Heart left ventricle (tissue), 16 donors: ENCODE measurements at regions of chrX and their contacts with region 1.

Region 1: GRCh38 chrX:149987613-149988012 is 49.3 kb upstream of the EOLA2 start:
- DNase-seq: no peak
- ATAC-seq: no peak
- H3K4me3 ChIP-seq: no peak overlapping the region
- H3K27ac ChIP-seq: no peak overlapping the region
- H3K4me1 ChIP-seq: peaks cover 0 to 9% (median 2%) of the 10 kb centered on the region in 12 donors
- H3K27me3 ChIP-seq: no peaks in the 10 kb centered on the region
- CTCF ChIP-seq: no peak
- POLR2A ChIP-seq: no peak

Region 2: DNA sequence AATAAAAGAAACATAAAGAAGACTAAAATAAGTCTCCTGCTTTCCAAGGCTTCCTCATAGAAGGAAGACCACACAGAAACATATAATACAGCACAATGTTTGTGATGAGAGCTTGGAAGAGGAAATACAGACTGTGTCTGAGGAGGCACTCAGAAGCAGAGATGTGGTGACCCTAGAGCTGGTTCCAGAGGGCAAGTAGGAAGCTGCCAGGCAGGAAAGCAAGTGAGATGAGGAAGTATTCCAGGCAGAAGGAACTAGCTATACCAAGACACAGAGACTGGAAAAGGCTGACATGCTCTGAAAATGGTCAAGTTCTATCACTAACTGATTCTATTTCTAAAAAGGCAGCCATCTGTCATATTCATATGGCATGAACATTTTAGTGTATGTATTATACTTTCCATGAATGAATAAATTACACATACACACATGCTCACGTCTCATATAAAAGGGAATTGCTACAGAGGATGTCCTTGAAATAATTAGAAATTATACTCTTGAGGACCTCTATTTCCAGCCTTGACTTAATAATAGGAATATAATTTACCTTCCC is 375.9 kb before region 1 on chrX:
- intact Hi-C with region 1: no loop called
- DNase-seq: no peak
- ATAC-seq: no peak
- H3K4me3 ChIP-seq: no peak overlapping the region
- H3K27ac ChIP-seq: no peak overlapping the region
- H3K4me1 ChIP-seq: peaks cover 0 to 3% (median 0%) of the 10 kb centered on the region in 12 donors
- H3K27me3 ChIP-seq: no peaks in the 10 kb centered on the region
- CTCF ChIP-seq: no peak
- POLR2A ChIP-seq: no peak

Region 3: GRCh38 chrX:150049647-150050046 is 62.0 kb after region 1 on chrX:
- intact Hi-C with region 1: no loop called
- DNase-seq: no peak
- ATAC-seq: no peak
- H3K4me3 ChIP-seq: no peak overlapping the region
- H3K27ac ChIP-seq: no peak overlapping the region
- H3K4me1 ChIP-seq: no peaks in the 10 kb centered on the region
- H3K27me3 ChIP-seq: no peaks in the 10 kb centered on the region
- CTCF ChIP-seq: no peak
- POLR2A ChIP-seq: no peak

Region 4: GRCh38 chrX:150200820-150201287 is 213.2 kb after region 1 on chrX:
- intact Hi-C with region 1: loop called in 1 of 10 experiments (anchors 10 kb)
- DNase-seq: peak in 2 of 5 donors; percentile 67 to 79
- ATAC-seq: peak in 3 of 4 donors; percentile 71 to 94 (median 81)
- H3K4me3 ChIP-seq: no peak overlapping the region
- H3K27ac ChIP-seq: no peak overlapping the region
- H3K4me1 ChIP-seq: peaks cover 0 to 4% (median 0%) of the 10 kb centered on the region in 12 donors
- H3K27me3 ChIP-seq: peaks cover 0 to 3% (median 0%) of the 10 kb centered on the region in 9 donors
- CTCF ChIP-seq: no peak
- POLR2A ChIP-seq: no peak

Region 5: GRCh38 chrX:150558424-150558823 is 570.8 kb after region 1 on chrX:
- intact Hi-C with region 1: no loop called
- DNase-seq: no peak
- ATAC-seq: peak in 2 of 4 donors; percentile 20 to 65
- H3K4me3 ChIP-seq: no peak overlapping the region
- H3K27ac ChIP-seq: peak overlapping the region in 1 of 12 donors; percentile 17
- H3K4me1 ChIP-seq: no peaks in the 10 kb centered on the region
- H3K27me3 ChIP-seq: no peaks in the 10 kb centered on the region
- CTCF ChIP-seq: no peak
- POLR2A ChIP-seq: no peak